Endothelial cell of umbilical vein (primary cell): ENCODE measurements at regions of chr6 and their contacts with region 1.

Region 1: DNA sequence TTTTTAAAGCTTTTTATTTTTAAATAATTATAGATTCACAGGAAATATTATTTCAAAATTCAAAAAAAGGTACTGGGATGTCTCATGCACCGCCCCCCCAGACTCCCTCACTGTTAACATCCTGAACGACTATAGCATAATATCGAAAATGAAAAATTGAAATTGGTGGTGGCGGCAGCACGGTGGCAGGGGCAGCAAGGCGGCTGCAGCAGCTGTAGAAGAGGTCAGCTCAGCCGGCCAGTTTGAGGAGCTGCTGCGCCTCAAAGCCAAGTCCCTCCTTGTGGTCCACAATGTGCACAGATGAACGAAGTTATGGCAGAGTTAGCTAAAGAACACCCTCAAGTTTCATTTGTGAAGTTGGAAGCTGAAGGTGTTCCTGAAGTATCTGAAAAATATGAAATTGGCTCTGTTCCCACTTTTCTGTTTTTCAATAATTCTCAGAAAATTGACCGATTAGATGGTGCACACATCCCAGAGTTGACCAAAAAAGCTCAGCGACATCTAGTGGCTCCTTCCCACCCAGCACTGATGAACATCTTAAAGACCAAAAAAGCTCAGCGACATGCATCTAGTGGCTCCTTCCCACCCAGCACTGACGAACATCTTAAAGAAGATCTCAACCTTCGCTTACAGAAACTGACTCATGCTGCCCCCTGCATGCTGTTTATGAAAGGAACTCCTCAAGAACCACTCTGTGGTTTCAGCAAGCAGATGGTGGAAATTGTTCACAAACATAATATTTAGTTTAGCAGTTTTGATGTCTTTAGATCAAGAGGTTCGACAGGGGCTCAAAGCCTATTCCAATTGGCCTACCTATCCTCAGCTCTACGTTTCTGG is 100.8 kb downstream of the FAM217A start:
- DNase-seq: peak; percentile 90
- H3K4me3 ChIP-seq: no peak overlapping the region
- H3K27ac ChIP-seq: no peak overlapping the region
- H3K4me1 ChIP-seq: peaks cover 6% of the 10 kb centered on the region
- H3K27me3 ChIP-seq: no peaks in the 10 kb centered on the region
- CTCF ChIP-seq: peak; percentile 66 to 93
- POLR2A ChIP-seq: no peak

Region 2: DNA sequence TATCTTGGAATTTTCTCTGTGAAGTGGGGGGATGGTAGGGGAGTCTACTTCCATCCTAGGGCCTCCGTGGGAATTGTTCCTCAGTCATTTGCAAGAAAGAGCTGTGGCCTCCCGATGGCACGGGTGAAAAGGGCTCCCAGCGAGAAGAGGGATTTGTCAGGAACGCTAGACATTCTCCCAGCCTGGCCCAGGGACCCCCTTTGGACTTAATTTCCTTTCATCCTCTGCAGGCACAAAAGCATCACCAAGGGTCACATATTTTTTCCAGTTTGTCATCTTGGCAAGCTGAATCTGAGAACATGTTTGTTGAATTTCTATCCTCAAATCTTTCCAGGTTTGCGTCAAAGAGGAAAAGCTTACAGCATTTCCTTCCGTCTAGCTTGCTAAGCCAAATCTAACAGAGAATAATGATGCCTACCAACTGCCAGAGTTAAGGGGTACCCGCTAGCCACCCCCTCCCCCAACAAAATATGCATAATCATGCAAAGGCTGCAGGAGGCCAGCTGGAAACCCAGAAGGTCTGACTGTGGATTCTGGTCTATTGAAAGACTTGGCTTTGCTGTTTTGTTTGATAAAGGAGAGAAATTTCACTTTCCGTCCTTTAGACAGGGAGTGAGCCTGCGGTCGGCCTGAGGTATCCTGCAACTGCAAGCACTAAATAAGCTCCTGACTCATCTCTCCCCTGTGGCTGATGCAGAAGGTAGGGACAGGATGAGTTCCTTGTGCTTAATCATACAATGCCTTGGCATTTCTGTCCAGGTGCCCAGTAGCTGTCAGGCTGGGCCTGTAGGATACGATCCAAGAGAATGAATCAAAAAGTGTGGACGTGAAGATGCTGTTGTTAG is 696.2 kb before region 1 on chr6:
- CTCF ChIA-PET with region 1: interaction called, 19 read pairs
- POLR2A ChIA-PET with region 1: no interaction called
- dilution Hi-C with region 1: loop called (anchors 25 kb)
- intact Hi-C with region 1: loop called (anchors 1 kb)
- DNase-seq: peak; percentile 94
- H3K4me3 ChIP-seq: no peak overlapping the region
- H3K27ac ChIP-seq: peak overlapping the region; percentile 97
- H3K4me1 ChIP-seq: peaks cover 27% of the 10 kb centered on the region
- H3K27me3 ChIP-seq: no peaks in the 10 kb centered on the region
- CTCF ChIP-seq: no peak
- POLR2A ChIP-seq: no peak

Region 3: GRCh38 chr6:3372007-3372846 is 605.9 kb before region 1 on chr6:
- CTCF ChIA-PET with region 1: no interaction called
- POLR2A ChIA-PET with region 1: no interaction called
- dilution Hi-C with region 1: no loop called
- intact Hi-C with region 1: no loop called
- DNase-seq: no peak
- H3K4me3 ChIP-seq: no peak overlapping the region
- H3K27ac ChIP-seq: no peak overlapping the region
- H3K4me1 ChIP-seq: no peaks in the 10 kb centered on the region
- H3K27me3 ChIP-seq: no peaks in the 10 kb centered on the region
- CTCF ChIP-seq: peak in 1 of 2 donors; percentile 1
- POLR2A ChIP-seq: no peak

Region 4: DNA sequence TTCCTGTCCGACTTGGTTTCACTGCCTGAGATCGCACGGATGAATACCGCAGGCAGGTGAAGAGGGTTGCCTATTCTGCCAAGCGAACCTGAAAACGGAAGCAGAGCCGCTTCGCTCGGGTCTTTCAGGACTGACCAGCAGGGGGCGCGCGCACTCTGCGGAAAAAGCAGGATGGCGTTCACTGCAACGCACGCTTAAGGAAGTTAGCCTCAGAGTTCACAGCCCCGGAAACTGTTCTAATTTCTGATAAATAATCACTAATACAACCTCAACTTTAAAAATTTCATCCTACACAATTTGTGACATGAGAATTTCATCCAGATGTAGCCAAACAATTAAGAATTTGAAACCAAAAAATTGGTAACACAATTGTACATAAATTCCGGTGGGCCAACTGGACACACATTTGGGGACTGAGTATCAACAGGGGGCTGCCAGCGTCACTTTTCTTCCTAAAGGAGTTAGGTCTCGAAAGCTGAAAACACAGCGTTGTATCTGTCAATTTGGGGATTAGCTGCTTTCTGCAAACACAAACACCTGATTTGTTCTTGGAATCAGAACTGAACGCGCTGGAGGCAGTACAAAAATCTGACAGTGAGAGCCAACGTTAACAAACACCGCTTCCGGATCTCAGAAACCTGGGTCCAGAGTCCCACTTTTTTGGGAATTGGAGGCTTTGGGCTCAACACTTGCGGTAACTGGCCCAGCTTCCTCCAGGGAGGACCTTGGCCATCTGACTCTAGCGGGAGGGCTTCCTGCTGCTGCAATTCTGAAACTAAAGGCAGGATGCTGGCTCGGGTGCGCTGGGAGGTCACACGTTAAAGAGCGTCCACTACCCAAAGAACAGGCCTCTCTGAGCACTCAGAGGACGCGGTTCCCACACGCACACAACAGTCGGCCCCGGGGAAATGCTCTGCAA is 235.4 kb before region 1 on chr6:
- CTCF ChIA-PET with region 1: interaction called, 72 read pairs
- POLR2A ChIA-PET with region 1: interaction called, 4 read pairs
- dilution Hi-C with region 1: no loop called
- intact Hi-C with region 1: loop called (anchors 1 kb)
- DNase-seq: peak; percentile 88
- H3K4me3 ChIP-seq: peak overlapping the region in 1 of 3 experiments; percentile 25
- H3K27ac ChIP-seq: peak overlapping the region; percentile 74
- H3K4me1 ChIP-seq: peaks cover 77% of the 10 kb centered on the region
- H3K27me3 ChIP-seq: no peaks in the 10 kb centered on the region
- CTCF ChIP-seq: peak; percentile 88 to 93
- POLR2A ChIP-seq: no peak

Region 5: GRCh38 chr6:3825851-3826581 is 152.1 kb before region 1 on chr6:
- CTCF ChIA-PET with region 1: interaction called, 17 read pairs
- POLR2A ChIA-PET with region 1: interaction called, 5 read pairs
- dilution Hi-C with region 1: no loop called
- intact Hi-C with region 1: loop called (anchors 1 kb)
- DNase-seq: peak; percentile 100
- H3K4me3 ChIP-seq: peak overlapping the region in 1 of 3 experiments; percentile 15
- H3K27ac ChIP-seq: peak overlapping the region; percentile 96
- H3K4me1 ChIP-seq: peaks cover 43% of the 10 kb centered on the region
- H3K27me3 ChIP-seq: no peaks in the 10 kb centered on the region
- CTCF ChIP-seq: no peak
- POLR2A ChIP-seq: no peak

Region 6: DNA sequence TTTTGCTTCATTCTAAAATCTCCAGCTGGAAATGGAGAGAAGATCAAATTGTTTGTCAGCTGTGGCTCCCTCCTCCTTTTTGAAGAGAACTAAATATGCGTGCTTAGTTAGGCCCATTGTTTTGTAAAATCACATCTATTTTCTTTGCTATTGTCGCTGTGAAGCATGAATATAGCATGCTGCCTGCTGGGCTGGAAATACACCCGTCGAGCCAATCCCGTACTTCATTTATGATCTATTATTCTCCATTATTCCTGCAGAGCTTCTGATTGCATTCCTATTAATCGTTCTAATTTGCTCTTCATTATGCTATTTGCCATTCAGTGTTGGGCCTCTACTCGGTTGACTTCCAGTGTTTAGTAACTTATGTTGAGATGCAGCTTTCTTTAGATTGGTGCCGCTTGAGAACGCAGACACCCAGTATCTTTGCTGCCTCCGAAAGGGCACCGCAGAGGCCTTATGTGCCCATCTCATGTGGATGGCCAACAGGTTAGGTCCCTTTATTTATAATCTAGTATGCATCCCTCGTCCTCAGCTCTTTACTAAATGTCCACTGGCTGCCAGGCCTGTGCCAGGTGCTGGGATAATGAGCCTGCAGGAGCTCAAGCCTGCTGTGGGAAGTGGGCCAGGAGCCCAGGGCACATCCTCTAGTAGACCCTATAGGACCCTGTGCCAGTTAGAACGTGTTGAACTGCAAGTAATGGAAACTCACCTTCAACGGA is 83.3 kb before region 1 on chr6:
- CTCF ChIA-PET with region 1: interaction called, 48 read pairs
- POLR2A ChIA-PET with region 1: no interaction called
- dilution Hi-C with region 1: no loop called
- intact Hi-C with region 1: no loop called
- DNase-seq: no peak
- H3K4me3 ChIP-seq: no peak overlapping the region
- H3K27ac ChIP-seq: no peak overlapping the region
- H3K4me1 ChIP-seq: no peaks in the 10 kb centered on the region
- H3K27me3 ChIP-seq: no peaks in the 10 kb centered on the region
- CTCF ChIP-seq: no peak
- POLR2A ChIP-seq: no peak

Region 7: GRCh38 chr6:3939964-3940363 is 38.1 kb before region 1 on chr6:
- CTCF ChIA-PET with region 1: interaction called, 10 read pairs
- POLR2A ChIA-PET with region 1: no interaction called
- dilution Hi-C with region 1: no loop called
- intact Hi-C with region 1: no loop called
- DNase-seq: no peak
- H3K4me3 ChIP-seq: no peak overlapping the region
- H3K27ac ChIP-seq: no peak overlapping the region
- H3K4me1 ChIP-seq: peaks cover 4% of the 10 kb centered on the region
- H3K27me3 ChIP-seq: peaks cover 2 to 8% of the 10 kb centered on the region in 2 experiments
- CTCF ChIP-seq: no peak
- POLR2A ChIP-seq: no peak

Region 8: DNA sequence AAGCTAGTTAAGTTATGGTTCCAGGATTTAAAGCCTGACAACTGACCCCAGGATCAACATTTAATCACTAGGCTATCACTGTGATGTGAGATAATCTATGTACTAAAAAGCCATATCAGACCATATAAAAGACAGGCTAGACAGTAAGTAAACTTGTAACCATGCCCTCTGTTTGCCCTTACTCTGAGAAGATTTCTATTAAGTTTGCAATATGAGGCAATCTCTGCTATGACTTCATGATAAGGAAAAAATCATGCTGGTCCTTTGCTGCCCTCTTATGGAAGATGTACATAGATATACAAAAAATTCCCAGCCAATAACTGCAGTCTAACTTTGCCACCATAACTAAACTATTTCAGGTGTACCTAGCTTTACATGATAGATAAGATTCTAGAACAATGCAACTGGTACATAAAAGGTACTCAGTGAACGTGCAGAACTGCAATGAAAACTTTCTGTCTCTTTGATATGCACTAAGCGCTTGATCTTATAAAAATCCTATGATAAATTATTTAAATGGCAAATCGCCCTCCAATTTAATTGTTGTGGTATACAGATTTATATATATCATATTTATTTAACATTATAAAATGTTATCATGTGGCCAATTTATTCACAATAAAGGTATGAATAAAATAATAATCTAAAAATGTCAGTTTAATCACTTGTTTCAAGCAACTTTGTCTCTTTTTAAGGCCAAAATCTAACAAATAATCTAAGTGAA is 30.4 kb after region 1 on chr6:
- CTCF ChIA-PET with region 1: interaction called, 20 read pairs
- POLR2A ChIA-PET with region 1: no interaction called
- dilution Hi-C with region 1: no loop called
- intact Hi-C with region 1: no loop called
- DNase-seq: peak; percentile 76
- H3K4me3 ChIP-seq: no peak overlapping the region
- H3K27ac ChIP-seq: no peak overlapping the region
- H3K4me1 ChIP-seq: no peaks in the 10 kb centered on the region
- H3K27me3 ChIP-seq: no peaks in the 10 kb centered on the region
- CTCF ChIP-seq: peak; percentile 19 to 45
- POLR2A ChIP-seq: no peak

Region 9: GRCh38 chr6:4049246-4049645 is 71.2 kb after region 1 on chr6:
- CTCF ChIA-PET with region 1: no interaction called
- POLR2A ChIA-PET with region 1: no interaction called
- dilution Hi-C with region 1: no loop called
- intact Hi-C with region 1: no loop called
- DNase-seq: peak; percentile 72
- H3K4me3 ChIP-seq: no peak overlapping the region
- H3K27ac ChIP-seq: peak overlapping the region; percentile 39
- H3K4me1 ChIP-seq: peaks cover 9% of the 10 kb centered on the region
- H3K27me3 ChIP-seq: no peaks in the 10 kb centered on the region
- CTCF ChIP-seq: no peak
- POLR2A ChIP-seq: no peak